ENCODE measurements at regions of chr2 and their contacts with region 1.

Region 1: GRCh38 chr2:10408649-10409579 is 39.2 kb downstream of the ODC1 start:
- DNase-seq: peak; percentile 93

Region 2: DNA sequence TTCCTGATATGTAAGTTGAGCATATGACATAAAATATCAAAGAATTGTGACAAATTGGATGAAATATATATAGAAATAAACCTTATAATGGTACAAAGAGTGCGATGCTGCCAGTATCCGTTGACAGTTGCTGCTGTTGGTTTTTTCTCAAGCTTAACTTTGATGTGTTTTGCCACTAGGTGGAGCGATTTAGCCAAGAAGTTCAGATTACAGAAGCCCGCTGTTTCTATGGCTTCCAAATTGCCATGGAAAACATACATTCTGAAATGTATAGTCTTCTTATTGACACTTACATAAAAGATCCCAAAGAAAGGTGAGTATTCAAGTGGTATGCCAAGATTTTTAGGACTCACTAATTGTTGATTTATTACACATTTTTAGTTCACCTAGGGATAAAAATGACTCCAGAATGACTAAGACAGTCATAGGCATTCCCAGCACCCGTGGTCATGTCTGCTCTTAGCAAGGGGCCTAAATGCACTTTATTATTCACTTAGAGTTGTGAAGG is 284.3 kb before region 1 on chr2:
- intact Hi-C with region 1: loop called (anchors 2 kb)
- DNase-seq: no peak

Region 3: DNA sequence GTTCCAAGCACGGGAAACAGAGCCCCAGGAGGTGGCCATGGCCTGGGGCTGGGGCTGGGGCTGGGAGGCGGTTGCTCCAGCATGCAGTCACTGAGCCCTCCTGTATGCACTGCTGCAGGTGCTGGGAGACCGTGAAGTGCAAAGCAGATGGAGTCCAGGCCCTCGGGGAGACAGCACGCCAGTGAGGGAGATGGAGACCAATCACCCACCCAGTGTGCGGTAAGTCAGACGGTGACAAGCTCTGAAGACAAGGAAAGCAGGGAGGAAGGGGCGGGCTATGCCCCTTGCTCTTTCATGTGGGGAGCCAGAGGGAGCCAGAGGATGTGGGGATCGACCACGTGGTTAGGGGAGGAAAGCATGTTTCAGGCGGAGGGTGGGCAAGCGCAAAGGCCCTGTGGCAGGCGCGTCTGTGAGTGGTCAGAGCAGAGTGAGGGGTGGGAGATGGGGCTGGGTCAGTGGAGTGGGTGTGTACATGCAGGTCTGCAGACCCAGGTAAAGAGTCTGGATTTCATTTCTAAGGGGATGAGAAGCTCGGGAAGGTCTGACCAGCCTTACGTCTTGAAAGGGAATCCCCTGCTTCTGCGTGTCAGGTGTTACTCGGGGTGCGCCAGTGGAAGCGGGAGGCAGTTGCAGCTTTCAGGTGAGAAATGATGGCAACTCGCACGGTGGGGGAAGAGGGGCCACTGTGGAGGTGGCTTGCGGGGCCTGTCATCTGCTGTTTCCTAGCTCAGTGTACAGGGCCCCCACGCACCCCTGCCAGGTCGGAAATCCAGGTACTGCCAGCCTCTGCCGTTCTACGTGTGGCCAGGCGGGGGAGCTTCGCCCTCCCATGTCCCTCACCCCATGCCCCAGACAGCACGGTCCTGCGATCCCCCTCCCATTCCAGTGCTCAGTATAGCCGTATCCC is 266.9 kb before region 1 on chr2:
- intact Hi-C with region 1: loop called (anchors 5 kb)
- DNase-seq: no peak

Region 4: DNA sequence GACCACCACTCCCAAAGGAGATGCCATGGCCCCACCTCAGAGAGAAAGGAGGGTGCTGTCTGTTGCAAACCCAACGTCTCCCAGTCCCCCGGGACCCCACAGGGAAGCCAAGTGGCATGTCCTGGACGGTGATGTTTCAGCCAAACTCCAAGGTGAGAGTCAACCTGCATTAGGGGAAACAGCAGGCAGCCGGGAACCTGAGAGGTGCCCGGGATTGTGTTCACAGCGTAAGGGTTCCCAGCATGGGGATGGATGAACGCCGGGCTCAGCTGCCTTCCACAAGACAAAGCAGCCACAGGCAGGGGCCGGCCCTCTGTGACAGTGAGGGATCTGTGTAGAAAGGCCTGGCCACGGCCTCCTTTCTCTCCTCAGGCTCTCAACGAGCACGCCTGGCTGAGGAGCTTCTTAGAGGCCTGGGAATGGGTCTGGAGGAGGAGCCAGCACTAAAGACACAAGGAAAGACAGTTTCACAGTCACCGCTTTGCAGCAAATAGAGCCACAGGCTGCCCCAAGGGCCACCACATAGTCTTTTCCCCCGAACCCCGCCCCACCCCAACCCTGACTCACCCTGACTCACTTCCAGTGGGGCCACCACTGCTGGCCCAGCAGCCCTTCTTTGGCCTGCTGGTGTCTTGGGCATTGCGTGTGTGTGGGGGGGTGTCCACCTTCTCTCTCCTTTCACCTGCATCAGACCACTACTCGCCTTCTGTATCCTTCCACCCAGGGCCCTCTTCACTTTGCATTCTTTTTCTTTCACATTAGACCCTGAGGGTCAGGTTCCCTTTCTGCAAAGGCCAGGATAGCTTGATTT is 125.8 kb before region 1 on chr2:
- intact Hi-C with region 1: loop called (anchors 5 kb)
- DNase-seq: peak; percentile 67

Region 5: GRCh38 chr2:10302479-10303180 is 106.3 kb before region 1 on chr2 and contains the start of gene HPCAL1:
- intact Hi-C with region 1: loop called (anchors 2 kb)
- DNase-seq: peak; percentile 95
- total RNA-seq, gene HPCAL1: 21.6 TPM

Region 6: DNA sequence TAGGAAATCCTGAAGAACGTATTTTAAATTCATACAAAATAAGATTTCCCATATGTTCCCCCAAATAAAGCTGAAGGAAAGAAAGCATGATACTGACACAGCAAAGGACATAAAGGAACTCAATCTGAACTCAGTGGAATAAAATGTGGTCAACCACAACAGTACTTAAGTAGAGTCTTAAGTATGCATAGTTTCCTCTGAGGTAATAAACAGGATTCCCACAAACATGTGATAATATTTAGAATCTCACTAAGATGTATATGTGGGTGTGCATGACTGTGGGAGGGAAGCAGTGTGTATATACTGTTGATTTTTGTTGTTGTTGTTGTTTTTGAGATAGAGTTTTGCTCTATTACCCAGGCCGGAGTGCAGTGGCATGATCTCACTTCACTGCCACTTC is 211.6 kb after region 1 on chr2:
- intact Hi-C with region 1: no loop called
- DNase-seq: no peak

Measured in cardiac septum (tissue), 1 donor.